CD8-positive, alpha-beta T cell (primary cell): ENCODE measurements at regions of chr19 and their contacts with region 1.

Region 1: DNA sequence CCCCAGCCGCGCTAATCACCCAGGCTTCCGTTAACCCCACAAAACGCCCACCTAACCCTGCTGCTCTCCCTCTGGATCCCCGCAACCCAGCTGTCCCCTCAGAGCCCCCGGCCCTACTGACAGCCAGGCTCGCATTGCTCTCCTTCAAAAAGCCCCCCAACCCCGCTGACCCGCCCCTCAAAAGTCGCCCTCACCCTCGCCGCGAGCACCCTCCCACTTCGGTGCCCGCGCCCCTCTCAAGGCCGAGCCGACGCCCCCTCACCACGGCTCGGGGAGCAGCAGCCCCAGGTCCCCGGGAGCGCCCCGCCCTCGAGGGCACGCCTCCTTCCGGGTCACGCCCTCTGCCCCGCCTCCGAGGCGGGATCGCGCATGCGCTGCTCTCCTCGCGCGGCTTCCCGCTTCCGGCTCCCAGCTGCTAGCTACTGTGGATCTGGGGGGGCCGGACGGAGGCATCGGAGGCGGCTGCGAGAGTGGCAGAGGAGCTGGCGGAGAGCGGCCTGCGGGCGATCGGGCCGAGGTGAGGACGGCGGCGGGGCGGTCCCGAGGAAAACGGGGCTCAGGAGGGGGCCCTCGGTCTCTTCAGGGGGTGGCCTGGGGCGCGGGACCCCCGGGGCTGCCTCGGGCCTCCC is 46.1 kb downstream of the ARHGEF18 start:
- DNase-seq: peak; percentile 79 to 97 (median 89)
- ATAC-seq: peak; percentile 90
- H3K4me3 ChIP-seq: peak overlapping the region; percentile 39 to 65
- H3K4me3 Mint-ChIP-seq: peak overlapping the region; percentile 86
- H3K27ac ChIP-seq: peak overlapping the region; percentile 12 to 72
- H3K27ac Mint-ChIP-seq: peak overlapping the region; percentile 87
- H3K4me1 ChIP-seq: peaks cover 26% of the 10 kb centered on the region
- H3K4me1 Mint-ChIP-seq: peaks cover 41% of the 10 kb centered on the region
- H3K27me3 ChIP-seq: no peaks in the 10 kb centered on the region
- H3K27me3 Mint-ChIP-seq: no peaks in the 10 kb centered on the region
- CTCF ChIP-seq: no peak

Region 2: GRCh38 chr19:7348587-7349230 is 46.1 kb before region 1 on chr19 and contains the start of gene ARHGEF18:
- CTCF ChIA-PET with region 1: interaction called, 3 read pairs
- POLR2A ChIA-PET with region 1: interaction called, 9 read pairs
- intact Hi-C with region 1: loop called in 1 of 2 experiments (anchors 1 kb)
- DNase-seq: peak; percentile 14 to 85 (median 68)
- ATAC-seq: peak; percentile 68
- H3K4me3 ChIP-seq: peak within 1 kb of the TSS; percentile 92 to 96
- H3K4me3 Mint-ChIP-seq: peak within 1 kb of the TSS; percentile 90
- H3K27ac ChIP-seq: peak within 1 kb of the TSS; percentile 74 to 83
- H3K27ac Mint-ChIP-seq: peak within 1 kb of the TSS; percentile 96
- H3K4me1 ChIP-seq: peaks cover 62% of the 10 kb centered on the region
- H3K4me1 Mint-ChIP-seq: peaks cover 70% of the 10 kb centered on the region
- H3K27me3 ChIP-seq: no peaks in the 10 kb centered on the region
- H3K27me3 Mint-ChIP-seq: no peaks in the 10 kb centered on the region
- CTCF ChIP-seq: no peak
- total RNA-seq, gene ARHGEF18: 78.8 to 81.0 TPM

Region 3: GRCh38 chr19:7482584-7483439 is 88.0 kb after region 1 on chr19:
- CTCF ChIA-PET with region 1: no interaction called
- POLR2A ChIA-PET with region 1: no interaction called
- intact Hi-C with region 1: no loop called
- DNase-seq: peak in 1 of 9 experiments; percentile 31
- ATAC-seq: peak; percentile 44
- H3K4me3 ChIP-seq: no peak overlapping the region
- H3K4me3 Mint-ChIP-seq: no peak overlapping the region
- H3K27ac ChIP-seq: no peak overlapping the region
- H3K27ac Mint-ChIP-seq: peak overlapping the region; percentile 62
- H3K4me1 ChIP-seq: peaks cover 9% of the 10 kb centered on the region
- H3K4me1 Mint-ChIP-seq: peaks cover 7% of the 10 kb centered on the region
- H3K27me3 ChIP-seq: no peaks in the 10 kb centered on the region
- H3K27me3 Mint-ChIP-seq: no peaks in the 10 kb centered on the region
- CTCF ChIP-seq: no peak

Region 4: GRCh38 chr19:7522072-7522922 is 127.5 kb after region 1 on chr19 and contains the start of gene MCOLN1:
- CTCF ChIA-PET with region 1: no interaction called
- POLR2A ChIA-PET with region 1: no interaction called
- intact Hi-C with region 1: loop called (anchors 5 kb)
- DNase-seq: peak; percentile 98 to 100 (median 100)
- ATAC-seq: peak; percentile 93
- H3K4me3 ChIP-seq: peak within 1 kb of the TSS; percentile 66 to 80
- H3K4me3 Mint-ChIP-seq: peak within 1 kb of the TSS; percentile 85
- H3K27ac ChIP-seq: peak within 1 kb of the TSS in 1 of 2 experiments; percentile 17
- H3K27ac Mint-ChIP-seq: peak within 1 kb of the TSS; percentile 85
- H3K4me1 ChIP-seq: peaks cover 16% of the 10 kb centered on the region
- H3K4me1 Mint-ChIP-seq: peaks cover 15% of the 10 kb centered on the region
- H3K27me3 ChIP-seq: no peaks in the 10 kb centered on the region
- H3K27me3 Mint-ChIP-seq: no peaks in the 10 kb centered on the region
- CTCF ChIP-seq: no peak
- total RNA-seq, gene MCOLN1: 9.0 to 13.3 TPM